Heart right ventricle (tissue), 16 donors: ENCODE measurements at regions of chr15 and their contacts with region 1.

Region 1: GRCh38 chr15:92808978-92809879 is 90.9 kb upstream of the CHD2 start:
- DNase-seq: peak; percentile 98 to 100
- ATAC-seq: peak; percentile 90 to 96 (median 92)
- H3K4me3 ChIP-seq: peak overlapping the region; percentile 36 to 73 (median 61)
- H3K27ac ChIP-seq: peak overlapping the region; percentile 96 to 99 (median 97)
- H3K4me1 ChIP-seq: peaks cover 0 to 66% (median 28%) of the 10 kb centered on the region in 9 donors
- H3K27me3 ChIP-seq: no peaks in the 10 kb centered on the region
- CTCF ChIP-seq: peak; percentile 93 to 100 (median 99)

Region 2: GRCh38 chr15:92831655-92832328 is 22.6 kb after region 1 on chr15:
- intact Hi-C with region 1: loop called in 4 of 10 experiments (anchors 1 to 2 kb)
- DNase-seq: peak; percentile 91 to 96
- ATAC-seq: peak; percentile 96 to 99 (median 98)
- H3K4me3 ChIP-seq: peak overlapping the region in 9 of 10 donors; percentile 1 to 51 (median 36)
- H3K27ac ChIP-seq: peak overlapping the region; percentile 81 to 97 (median 92)
- H3K4me1 ChIP-seq: peaks cover 14 to 50% (median 40%) of the 10 kb centered on the region in 9 donors
- H3K27me3 ChIP-seq: no peaks in the 10 kb centered on the region
- CTCF ChIP-seq: peak in 1 of 9 donors; percentile 10

Region 3: GRCh38 chr15:92903941-92904831 is 95.0 kb after region 1 on chr15:
- intact Hi-C with region 1: loop called in 8 of 10 experiments (anchors 1 to 5 kb)
- DNase-seq: peak; percentile 98 to 99
- ATAC-seq: peak; percentile 93 to 98 (median 95)
- H3K4me3 ChIP-seq: peak overlapping the region; percentile 16 to 70 (median 60)
- H3K27ac ChIP-seq: peak overlapping the region; percentile 87 to 99 (median 95)
- H3K4me1 ChIP-seq: peaks cover 12 to 69% (median 60%) of the 10 kb centered on the region in 9 donors
- H3K27me3 ChIP-seq: no peaks in the 10 kb centered on the region
- CTCF ChIP-seq: no peak

Region 4: GRCh38 chr15:93001881-93002280 is 192.7 kb after region 1 on chr15:
- intact Hi-C with region 1: loop called in 1 of 10 experiments (anchors 10 kb)
- DNase-seq: no peak
- ATAC-seq: peak in 3 of 8 donors; percentile 25 to 58 (median 46)
- H3K4me3 ChIP-seq: no peak overlapping the region
- H3K27ac ChIP-seq: peak overlapping the region in 2 of 10 donors; percentile 30
- H3K4me1 ChIP-seq: peaks cover 0 to 6% (median 0%) of the 10 kb centered on the region in 9 donors
- H3K27me3 ChIP-seq: no peaks in the 10 kb centered on the region
- CTCF ChIP-seq: peak in 5 of 9 donors; percentile 15 to 39 (median 23)